AG04450 (cell line): ENCODE measurements at regions of chr7 and their contacts with region 1.

Region 1: DNA sequence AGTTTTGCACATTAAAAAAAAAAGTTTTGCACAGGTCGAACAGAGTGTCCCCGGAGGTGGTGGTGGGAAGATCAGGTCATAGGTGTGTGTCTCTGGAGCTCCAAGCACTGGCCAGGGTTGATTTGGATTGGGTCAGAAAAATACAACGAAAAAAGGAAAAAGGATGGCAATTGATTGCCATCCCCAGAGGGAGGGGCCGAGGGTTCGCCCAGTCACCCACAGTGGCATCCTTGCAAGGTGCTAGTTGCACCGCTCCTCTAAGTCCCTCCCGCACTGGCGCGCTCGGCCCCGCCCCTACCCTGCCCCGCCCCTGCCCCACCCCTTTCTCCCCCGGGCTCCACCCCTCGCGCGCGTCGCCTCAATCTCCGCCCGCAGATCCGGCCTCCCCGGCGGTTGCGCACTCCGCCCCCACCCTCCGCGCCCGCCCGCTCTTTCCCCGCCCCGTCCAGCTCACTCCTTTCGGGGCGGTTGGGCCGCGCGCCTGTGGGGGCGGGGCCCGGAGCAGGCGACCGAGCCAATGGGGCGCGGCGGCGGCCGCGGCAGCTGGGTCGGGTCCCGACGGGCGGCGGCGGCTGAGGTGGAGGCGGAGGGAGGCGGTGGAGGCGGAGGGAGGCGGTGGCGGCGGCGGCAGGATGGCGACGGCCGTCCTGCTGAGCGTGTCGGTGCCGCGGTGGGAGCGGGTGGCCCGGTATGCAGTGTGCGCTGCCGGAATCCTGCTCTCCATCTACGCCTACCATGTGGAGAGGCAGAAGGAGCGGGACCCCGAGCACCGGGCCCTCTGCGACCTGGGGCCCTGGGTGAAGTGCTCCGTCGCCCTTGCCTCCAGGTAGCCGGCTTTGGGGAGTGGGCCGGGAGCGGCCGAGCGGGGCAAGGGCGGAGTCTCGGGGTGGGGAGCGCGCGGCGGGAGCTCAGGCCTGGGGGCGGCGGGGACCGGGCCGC is 31.5 kb upstream of the ERV3-1 start:
- DNase-seq: peak; percentile 76
- H3K4me3 ChIP-seq: peak overlapping the region; percentile 73
- H3K27ac ChIP-seq: peak overlapping the region; percentile 57
- H3K27me3 ChIP-seq: no peaks in the 10 kb centered on the region
- CTCF ChIP-seq: no peak

Region 2: DNA sequence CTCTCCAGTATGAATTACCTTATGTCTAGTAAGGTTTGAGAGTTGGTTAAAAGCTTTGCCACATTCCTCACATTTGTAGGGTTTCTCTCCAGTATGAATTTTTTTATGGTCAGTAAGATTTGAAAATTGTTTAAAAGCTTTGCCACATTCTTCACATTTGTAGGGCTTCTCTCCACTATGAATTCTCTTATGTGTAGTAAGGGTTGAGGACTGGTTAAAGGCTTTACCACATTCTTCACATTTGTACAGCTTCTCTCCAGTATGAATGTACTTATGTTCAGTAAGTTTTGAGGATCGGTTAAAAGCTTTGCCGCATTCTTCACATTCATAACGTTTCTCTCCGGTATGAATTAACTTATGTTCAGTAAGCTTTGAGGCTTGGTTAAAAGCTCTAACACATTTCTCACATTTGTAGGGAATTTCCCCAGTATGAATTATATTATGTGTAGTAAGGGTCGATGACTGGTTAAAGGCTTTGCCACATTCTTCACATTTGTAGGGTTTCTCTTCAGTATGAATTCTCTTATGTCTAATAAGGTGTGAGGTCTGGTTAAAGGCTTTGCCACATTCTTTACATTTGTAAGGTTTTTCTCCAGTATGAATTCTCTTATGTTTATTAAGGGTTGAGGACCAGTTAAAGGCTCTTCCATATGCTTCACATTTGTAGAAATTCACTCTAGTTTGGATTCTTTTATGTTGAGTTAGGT is 59.4 kb before region 1 on chr7:
- CTCF ChIA-PET with region 1: no interaction called
- POLR2A ChIA-PET with region 1: no interaction called
- DNase-seq: no peak
- H3K4me3 ChIP-seq: no peak overlapping the region
- H3K27ac ChIP-seq: no peak overlapping the region
- H3K27me3 ChIP-seq: no peaks in the 10 kb centered on the region
- CTCF ChIP-seq: no peak

Region 3: DNA sequence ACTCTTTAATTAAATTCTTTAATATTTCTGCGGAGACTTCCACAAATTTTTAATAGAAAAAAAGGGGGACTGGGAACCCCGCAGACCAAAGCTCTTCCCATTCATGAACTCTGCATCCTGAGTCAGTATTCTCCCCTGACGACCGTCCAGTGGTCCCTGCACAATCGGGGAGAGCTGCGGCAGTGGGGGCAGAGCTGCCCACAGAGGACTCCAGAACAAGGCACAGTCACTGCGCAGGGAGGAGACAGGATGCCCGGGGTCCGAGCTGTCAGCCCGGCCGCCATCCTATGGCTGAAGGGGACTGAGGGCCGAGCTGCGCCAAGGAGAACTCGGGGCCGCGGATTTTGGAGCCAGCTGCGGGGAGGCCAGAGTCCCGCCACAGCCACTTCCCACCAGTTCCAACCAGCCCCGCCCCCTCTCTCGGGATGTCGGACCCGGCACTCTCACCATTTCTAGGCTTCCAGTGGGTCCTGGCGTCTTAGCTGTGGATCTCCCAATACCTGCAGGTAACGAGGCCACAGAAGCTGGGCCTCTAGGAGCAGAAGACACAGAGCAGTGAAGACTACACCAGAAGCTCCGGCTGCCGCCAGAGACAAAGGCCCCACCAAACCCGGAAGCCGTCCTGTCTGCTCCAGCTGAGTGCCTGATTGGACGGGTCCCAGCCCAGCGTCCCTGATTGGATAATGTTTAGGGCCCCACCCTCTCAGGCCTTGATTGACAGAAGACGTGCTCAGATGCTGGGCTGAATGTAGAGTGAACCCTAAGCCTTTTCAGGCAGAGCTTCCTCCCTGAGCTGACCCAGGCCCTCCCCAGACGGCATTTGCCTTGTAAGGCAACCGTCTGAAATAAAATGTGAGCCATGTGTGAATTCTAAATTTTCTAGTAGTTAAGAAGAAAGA is 31.7 kb before region 1 on chr7 and contains the start of gene ERV3-1:
- CTCF ChIA-PET with region 1: no interaction called
- POLR2A ChIA-PET with region 1: interaction called, 18 read pairs
- DNase-seq: peak; percentile 85
- H3K4me3 ChIP-seq: peak within 1 kb of the TSS; percentile 93
- H3K27ac ChIP-seq: peak within 1 kb of the TSS; percentile 87
- H3K27me3 ChIP-seq: no peaks in the 10 kb centered on the region
- CTCF ChIP-seq: no peak
- polyA plus RNA-seq, gene ERV3-1: 16.3 and 19.3 TPM in 2 replicates